Calu3 (cell line): ENCODE measurements at regions of chr3 and their contacts with region 1.

Region 1: DNA sequence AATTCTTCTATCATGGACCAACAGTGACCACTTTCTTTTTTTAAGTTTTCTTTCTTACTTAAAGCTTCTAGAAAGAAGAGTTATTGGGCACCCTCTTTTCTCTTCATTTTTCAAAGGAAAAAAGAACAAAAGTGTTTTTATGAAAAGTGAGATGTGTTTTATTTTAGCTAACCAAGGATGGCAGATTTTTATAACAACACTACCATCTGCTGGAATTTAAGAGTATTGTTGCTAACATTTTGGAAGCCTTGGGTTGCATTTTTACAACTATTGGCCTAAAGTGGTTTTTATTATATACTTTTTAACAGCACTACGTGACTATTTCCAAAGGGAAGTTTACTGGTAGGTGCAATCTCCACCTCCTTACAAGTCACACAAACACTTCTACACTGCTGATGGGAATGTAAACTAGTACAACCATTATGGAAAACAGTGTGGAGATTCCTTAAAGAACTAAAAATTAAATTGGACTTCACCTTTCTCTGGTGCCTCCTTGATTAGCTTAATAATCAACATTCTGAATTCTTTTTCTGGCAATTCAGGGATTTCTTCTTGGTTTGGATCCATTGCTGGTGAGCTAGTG is 237.7 kb upstream of the AGTR1 start:
- DNase-seq: no peak
- H3K4me3 Mint-ChIP-seq: no peak overlapping the region
- H3K27ac Mint-ChIP-seq: no peak overlapping the region
- H3K4me1 Mint-ChIP-seq: no peaks in the 10 kb centered on the region
- H3K27me3 Mint-ChIP-seq: no peaks in the 10 kb centered on the region
- CTCF ChIP-seq: peak; percentile 64

Region 2: GRCh38 chr3:148092624-148093347 is 367.2 kb before region 1 on chr3:
- CTCF ChIA-PET with region 1: no interaction called
- intact Hi-C with region 1: loop called (anchors 10 kb)
- DNase-seq: no peak
- H3K4me3 Mint-ChIP-seq: no peak overlapping the region
- H3K27ac Mint-ChIP-seq: no peak overlapping the region
- H3K4me1 Mint-ChIP-seq: no peaks in the 10 kb centered on the region
- H3K27me3 Mint-ChIP-seq: no peaks in the 10 kb centered on the region
- CTCF ChIP-seq: no peak

Region 3: GRCh38 chr3:148319161-148319915 is 140.7 kb before region 1 on chr3:
- CTCF ChIA-PET with region 1: no interaction called
- intact Hi-C with region 1: loop called (anchors 5 kb)
- DNase-seq: no peak
- H3K4me3 Mint-ChIP-seq: no peak overlapping the region
- H3K27ac Mint-ChIP-seq: no peak overlapping the region
- H3K4me1 Mint-ChIP-seq: no peaks in the 10 kb centered on the region
- H3K27me3 Mint-ChIP-seq: no peaks in the 10 kb centered on the region
- CTCF ChIP-seq: no peak

Region 4: GRCh38 chr3:148379763-148380382 is 80.1 kb before region 1 on chr3:
- CTCF ChIA-PET with region 1: no interaction called
- intact Hi-C with region 1: loop called (anchors 1 kb)
- DNase-seq: peak; percentile 55
- H3K4me3 Mint-ChIP-seq: no peak overlapping the region
- H3K27ac Mint-ChIP-seq: no peak overlapping the region
- H3K4me1 Mint-ChIP-seq: no peaks in the 10 kb centered on the region
- H3K27me3 Mint-ChIP-seq: no peaks in the 10 kb centered on the region
- CTCF ChIP-seq: peak; percentile 39

Region 5: DNA sequence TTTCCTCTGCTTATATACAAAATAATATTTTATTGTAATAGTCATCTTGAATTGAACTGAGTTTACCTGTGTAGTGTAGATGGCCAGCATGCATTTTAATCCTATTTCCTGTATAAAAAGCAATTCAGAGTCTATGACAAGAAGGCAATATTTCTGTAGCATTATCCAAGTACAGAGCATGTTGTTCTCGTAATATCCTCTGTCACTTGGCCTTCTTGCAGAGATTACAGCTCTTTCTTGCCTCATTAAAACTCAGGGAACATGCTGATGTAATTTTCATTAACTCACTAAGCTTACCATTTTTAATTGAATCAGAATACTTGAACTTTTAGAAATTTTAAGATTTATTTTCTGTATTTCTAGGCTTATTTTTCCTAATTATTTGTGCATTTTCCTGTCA is 34.4 kb after region 1 on chr3:
- CTCF ChIA-PET with region 1: no interaction called
- intact Hi-C with region 1: no loop called
- DNase-seq: no peak
- H3K4me3 Mint-ChIP-seq: no peak overlapping the region
- H3K27ac Mint-ChIP-seq: no peak overlapping the region
- H3K4me1 Mint-ChIP-seq: no peaks in the 10 kb centered on the region
- H3K27me3 Mint-ChIP-seq: no peaks in the 10 kb centered on the region
- CTCF ChIP-seq: no peak

Region 6: DNA sequence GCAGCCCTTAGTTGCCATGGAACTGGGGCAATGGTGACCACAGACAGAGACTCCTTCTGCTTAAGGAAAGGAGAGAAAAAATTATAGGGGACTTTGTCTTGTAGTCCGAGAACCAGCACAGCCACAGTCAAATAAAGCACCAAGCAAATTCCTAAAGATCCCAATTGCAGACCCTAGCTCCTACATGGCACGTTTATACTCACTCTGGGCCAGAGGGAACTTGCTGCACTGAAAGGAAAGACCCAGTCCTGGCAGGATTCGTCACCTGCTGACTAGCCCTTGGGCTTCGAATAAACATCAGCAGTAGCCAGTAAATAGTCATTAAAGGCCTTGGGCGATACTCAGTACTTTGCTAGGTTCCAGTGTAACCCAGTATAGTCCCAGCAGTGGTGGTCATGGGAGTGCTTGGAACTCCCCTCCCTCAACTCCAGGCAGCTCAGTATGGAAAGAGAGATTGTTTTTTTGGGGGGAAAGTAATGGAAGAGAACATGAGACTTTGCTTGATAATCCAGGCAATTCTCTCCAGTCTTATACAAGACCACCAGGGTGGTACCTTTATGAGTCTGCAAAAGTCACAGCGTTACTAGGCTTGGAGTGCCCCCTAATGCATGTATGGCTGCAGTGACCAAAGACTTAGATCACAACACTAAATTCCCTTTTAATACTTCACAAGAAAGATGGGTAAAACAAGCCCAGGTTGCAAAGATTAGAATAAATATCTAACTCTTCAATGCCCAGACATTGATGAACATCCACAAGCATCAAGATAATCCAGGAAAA is 171.3 kb after region 1 on chr3:
- CTCF ChIA-PET with region 1: no interaction called
- intact Hi-C with region 1: loop called (anchors 2 kb)
- DNase-seq: peak; percentile 40
- H3K4me3 Mint-ChIP-seq: no peak overlapping the region
- H3K27ac Mint-ChIP-seq: no peak overlapping the region
- H3K4me1 Mint-ChIP-seq: no peaks in the 10 kb centered on the region
- H3K27me3 Mint-ChIP-seq: no peaks in the 10 kb centered on the region
- CTCF ChIP-seq: peak; percentile 47

Region 7: DNA sequence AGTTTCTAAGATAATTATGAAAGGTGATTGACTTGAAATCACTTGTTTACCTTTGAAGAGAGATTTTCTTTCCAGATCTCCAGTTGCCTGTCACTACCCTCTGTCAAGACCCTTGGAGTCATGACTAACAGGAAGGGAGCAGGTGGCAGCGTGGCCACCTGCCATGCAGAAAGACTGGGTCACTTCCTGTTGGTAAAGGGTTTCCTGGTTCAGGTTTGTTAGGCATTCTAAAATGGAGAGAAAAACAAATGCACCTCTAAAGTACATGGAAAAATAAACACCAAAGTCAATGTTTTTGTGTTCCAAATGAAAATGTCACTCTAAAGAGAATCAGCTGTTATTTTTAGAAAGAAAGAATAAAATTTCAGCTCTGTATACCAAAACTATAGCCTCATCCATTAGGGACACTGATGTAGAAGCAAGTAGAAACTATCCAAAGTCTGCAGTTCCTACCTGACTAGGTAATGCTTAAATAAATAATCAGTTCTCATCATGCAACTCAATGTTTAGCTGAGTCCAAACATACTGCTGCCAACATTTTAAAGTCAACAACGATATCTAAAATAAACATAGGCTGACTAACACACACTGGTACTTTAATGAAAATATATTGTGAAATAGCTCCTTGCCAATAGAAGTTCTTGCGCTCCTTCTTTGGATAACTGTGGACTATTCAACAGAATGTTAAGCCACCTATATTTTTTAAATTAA is 941.3 kb after region 1 on chr3:
- CTCF ChIA-PET with region 1: no interaction called
- intact Hi-C with region 1: no loop called
- DNase-seq: peak; percentile 86
- H3K4me3 Mint-ChIP-seq: peak overlapping the region; percentile 37
- H3K27ac Mint-ChIP-seq: peak overlapping the region; percentile 91
- H3K4me1 Mint-ChIP-seq: peaks cover 84% of the 10 kb centered on the region
- H3K27me3 Mint-ChIP-seq: no peaks in the 10 kb centered on the region
- CTCF ChIP-seq: no peak